ENCODE measurements at regions of chr6 and their contacts with region 1.

Region 1: DNA sequence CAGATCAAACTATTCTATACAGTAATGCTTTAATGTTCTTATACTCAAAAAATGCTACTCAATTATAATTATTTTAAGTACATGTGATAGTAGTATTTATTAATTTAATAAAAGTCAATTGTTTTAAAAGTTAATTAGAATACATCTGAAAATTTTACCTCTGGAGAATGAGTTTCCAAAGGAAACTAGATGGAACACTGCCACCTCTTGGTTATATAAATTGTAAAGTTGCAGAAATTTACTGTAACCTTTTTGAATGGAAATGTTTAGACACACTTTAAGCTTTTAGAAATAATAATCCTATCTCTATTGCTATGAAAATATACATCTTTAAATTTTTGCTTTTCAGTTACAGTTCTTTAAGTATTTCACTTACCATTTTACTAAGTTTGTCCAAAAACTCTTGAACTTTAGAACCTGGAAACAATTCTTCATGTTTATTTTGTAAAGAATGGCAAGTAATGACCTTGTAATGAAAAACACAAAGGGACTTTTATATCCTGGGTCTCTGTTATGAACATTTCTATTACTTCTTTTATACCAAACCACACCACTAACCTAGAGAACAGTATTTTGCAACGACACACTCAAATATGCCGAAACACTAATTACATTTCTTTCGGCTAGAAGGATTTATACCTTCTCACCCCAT is 10.9 kb upstream of the BMP5 start:
- DNase-seq: peak; percentile 34
- H3K4me3 Mint-ChIP-seq: no peak overlapping the region
- H3K27ac Mint-ChIP-seq: no peak overlapping the region
- H3K4me1 Mint-ChIP-seq: peaks cover 18% of the 10 kb centered on the region
- H3K27me3 Mint-ChIP-seq: no peaks in the 10 kb centered on the region
- CTCF ChIP-seq: peak; percentile 50

Region 2: DNA sequence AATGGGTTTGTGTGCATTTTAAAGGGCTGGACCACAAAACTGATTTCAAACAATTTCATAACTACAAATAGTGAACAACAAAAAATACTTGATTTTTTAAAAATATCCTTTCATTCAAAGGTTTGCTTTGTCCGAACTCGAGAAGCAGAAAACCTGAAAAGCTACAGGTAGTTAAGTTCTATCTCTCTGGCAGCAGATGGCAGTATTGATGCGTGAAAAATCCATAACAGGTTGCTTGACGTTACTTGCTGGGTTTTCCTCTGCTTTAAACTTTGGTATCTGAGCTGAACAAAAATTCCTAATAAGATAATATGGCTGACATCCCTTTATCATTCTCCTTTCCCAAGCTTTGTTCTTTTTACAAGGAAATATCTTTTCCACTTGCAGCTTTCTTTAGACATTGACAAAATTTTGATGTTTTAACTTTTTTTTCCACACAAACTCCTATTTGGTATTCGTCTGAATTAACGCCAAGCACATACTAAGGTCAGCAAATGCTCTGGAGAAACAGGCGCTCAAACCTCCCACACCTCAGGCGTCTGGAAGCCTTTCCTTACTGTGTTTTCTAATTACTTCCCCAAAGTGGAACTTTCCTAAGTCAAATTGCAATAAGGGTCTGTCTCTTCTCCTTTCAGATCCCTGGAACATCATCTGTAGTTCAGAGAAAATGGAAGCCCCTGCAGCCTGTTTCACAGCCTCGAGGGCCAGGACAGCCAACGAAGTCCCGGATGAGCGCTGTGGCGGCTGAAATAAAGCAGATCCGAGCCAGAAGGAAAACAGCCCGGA is 609.4 kb before region 1 on chr6:
- CTCF ChIA-PET with region 1: interaction called, 10 read pairs
- POLR2A ChIA-PET with region 1: interaction called, 3 read pairs
- intact Hi-C with region 1: loop called (anchors 2 kb)
- DNase-seq: peak; percentile 72
- H3K4me3 Mint-ChIP-seq: no peak overlapping the region
- H3K27ac Mint-ChIP-seq: no peak overlapping the region
- H3K4me1 Mint-ChIP-seq: no peaks in the 10 kb centered on the region
- H3K27me3 Mint-ChIP-seq: no peaks in the 10 kb centered on the region
- CTCF ChIP-seq: peak; percentile 64

Region 3: GRCh38 chr6:55617272-55617671 is 269.0 kb before region 1 on chr6:
- CTCF ChIA-PET with region 1: interaction called, 16 read pairs
- POLR2A ChIA-PET with region 1: interaction called, 3 read pairs
- intact Hi-C with region 1: loop called (anchors 1 kb)
- DNase-seq: peak; percentile 70
- H3K4me3 Mint-ChIP-seq: no peak overlapping the region
- H3K27ac Mint-ChIP-seq: no peak overlapping the region
- H3K4me1 Mint-ChIP-seq: peaks cover 4% of the 10 kb centered on the region
- H3K27me3 Mint-ChIP-seq: no peaks in the 10 kb centered on the region
- CTCF ChIP-seq: peak; percentile 43

Region 4: GRCh38 chr6:55758156-55758888 is 128.0 kb before region 1 on chr6:
- CTCF ChIA-PET with region 1: no interaction called
- POLR2A ChIA-PET with region 1: interaction called, 24 read pairs
- intact Hi-C with region 1: loop called (anchors 5 kb)
- DNase-seq: peak; percentile 97
- H3K4me3 Mint-ChIP-seq: peak overlapping the region; percentile 63
- H3K27ac Mint-ChIP-seq: peak overlapping the region; percentile 94
- H3K4me1 Mint-ChIP-seq: peaks cover 45% of the 10 kb centered on the region
- H3K27me3 Mint-ChIP-seq: no peaks in the 10 kb centered on the region
- CTCF ChIP-seq: no peak

Region 5: GRCh38 chr6:55953335-55953734 is 67.0 kb after region 1 on chr6:
- CTCF ChIA-PET with region 1: interaction called, 7 read pairs
- POLR2A ChIA-PET with region 1: interaction called, 3 read pairs
- intact Hi-C with region 1: loop called (anchors 2 kb)
- DNase-seq: peak; percentile 61
- H3K4me3 Mint-ChIP-seq: peak overlapping the region; percentile 38
- H3K27ac Mint-ChIP-seq: no peak overlapping the region
- H3K4me1 Mint-ChIP-seq: no peaks in the 10 kb centered on the region
- H3K27me3 Mint-ChIP-seq: no peaks in the 10 kb centered on the region
- CTCF ChIP-seq: peak; percentile 47

Region 6: DNA sequence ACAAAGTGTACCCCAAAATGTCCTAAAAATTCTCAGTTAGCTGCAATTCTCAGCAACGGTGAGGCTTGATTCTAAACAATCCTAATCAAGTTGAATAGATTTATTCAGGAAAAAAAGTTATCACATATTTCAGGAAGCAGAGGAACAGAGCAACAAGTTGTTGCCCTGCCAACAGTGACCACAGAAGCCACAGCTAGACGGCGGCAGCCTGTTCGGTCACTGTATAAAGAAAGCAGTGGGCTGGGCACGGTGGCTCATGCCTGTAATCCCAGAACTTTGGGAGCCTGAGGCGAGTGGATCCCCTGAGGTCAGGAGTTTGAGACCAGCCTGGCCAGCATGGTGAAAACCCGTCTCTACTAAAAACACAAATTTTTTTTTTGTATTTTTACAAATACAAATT is 160.3 kb after region 1 on chr6:
- CTCF ChIA-PET with region 1: no interaction called
- POLR2A ChIA-PET with region 1: no interaction called
- intact Hi-C with region 1: no loop called
- DNase-seq: peak; percentile 71
- H3K4me3 Mint-ChIP-seq: no peak overlapping the region
- H3K27ac Mint-ChIP-seq: no peak overlapping the region
- H3K4me1 Mint-ChIP-seq: peaks cover 14% of the 10 kb centered on the region
- H3K27me3 Mint-ChIP-seq: no peaks in the 10 kb centered on the region
- CTCF ChIP-seq: no peak